ENCODE measurements at regions of chr12 and their contacts with region 1.

Region 1: GRCh38 chr12:6697584-6698351 is 2.8 kb downstream of the PIANP start:
- DNase-seq: no peak
- ATAC-seq: peak; percentile 43 to 67 (median 65)
- H3K4me3 ChIP-seq: no peak overlapping the region
- H3K27ac ChIP-seq: no peak overlapping the region
- H3K4me1 ChIP-seq: peaks cover 0 to 15% (median 8%) of the 10 kb centered on the region in 12 donors
- H3K27me3 ChIP-seq: peaks cover 10 to 70% (median 45%) of the 10 kb centered on the region in 9 donors
- CTCF ChIP-seq: peak in 11 of 12 donors; percentile 12 to 50 (median 37)
- POLR2A ChIP-seq: no peak

Region 2: GRCh38 chr12:6451348-6452244 is 246.2 kb before region 1 on chr12 and contains the start of gene TAPBPL:
- intact Hi-C with region 1: no loop called
- DNase-seq: peak; percentile 88 to 93 (median 90)
- ATAC-seq: peak; percentile 91 to 96 (median 94)
- H3K4me3 ChIP-seq: peak within 1 kb of the TSS; percentile 40 to 99 (median 68)
- H3K27ac ChIP-seq: peak within 1 kb of the TSS; percentile 90 to 100 (median 97)
- H3K4me1 ChIP-seq: peaks cover 0 to 42% (median 25%) of the 10 kb centered on the region in 12 donors
- H3K27me3 ChIP-seq: no peaks in the 10 kb centered on the region
- CTCF ChIP-seq: no peak
- POLR2A ChIP-seq: peak; percentile 19 to 64
- total RNA-seq, gene TAPBPL: 6.9 to 55.6 (median 14.1) TPM

Region 3: DNA sequence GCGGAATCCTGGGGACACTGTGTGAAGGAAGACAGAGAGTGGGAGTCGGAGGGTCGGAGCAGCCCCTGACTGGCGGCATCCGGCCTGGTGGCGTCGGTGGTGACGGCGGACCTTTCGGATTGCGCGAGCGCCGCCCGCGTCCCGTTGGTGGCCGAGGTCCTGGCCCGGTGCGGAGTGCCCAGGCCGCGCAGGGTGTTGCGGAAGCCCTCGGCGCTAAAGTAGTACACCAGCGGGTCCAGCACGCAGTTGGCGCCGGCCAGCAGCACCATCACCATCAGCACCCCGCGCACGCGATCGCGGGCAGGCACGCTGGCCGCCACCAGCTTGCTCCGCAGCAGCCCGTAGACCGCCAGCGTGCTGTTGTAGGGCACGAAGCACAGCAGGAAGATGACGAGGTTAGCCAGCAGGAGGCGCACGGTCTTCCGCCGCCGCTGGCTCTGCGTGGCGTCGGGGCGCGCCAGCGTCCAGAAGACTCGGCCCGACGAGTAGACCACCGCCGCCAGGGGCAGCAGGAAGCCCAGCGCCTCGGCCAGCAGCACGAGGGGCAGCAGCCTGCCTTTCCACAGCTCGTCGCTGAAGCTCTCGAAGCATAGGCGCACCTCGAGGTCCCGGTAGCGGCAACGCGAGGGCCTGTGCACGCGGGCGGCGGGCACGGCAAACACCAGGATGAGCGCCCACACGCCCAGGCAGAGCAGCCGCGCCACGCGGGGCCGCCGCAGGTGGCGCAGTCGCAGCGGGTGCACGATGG is 77.5 kb before region 1 on chr12:
- intact Hi-C with region 1: loop called in 4 of 10 experiments (anchors 5 to 10 kb)
- DNase-seq: peak in 3 of 5 donors; percentile 51 to 87 (median 53)
- ATAC-seq: peak in 3 of 4 donors; percentile 22 to 48 (median 45)
- H3K4me3 ChIP-seq: peak overlapping the region in 10 of 12 donors; percentile 3 to 43 (median 28)
- H3K27ac ChIP-seq: no peak overlapping the region
- H3K4me1 ChIP-seq: peaks cover 0 to 40% (median 0%) of the 10 kb centered on the region in 12 donors
- H3K27me3 ChIP-seq: peaks cover 0 to 15% (median 0%) of the 10 kb centered on the region in 9 donors
- CTCF ChIP-seq: peak; percentile 29 to 68 (median 50)
- POLR2A ChIP-seq: no peak

Region 4: GRCh38 chr12:6723607-6724396 is 26.0 kb after region 1 on chr12 and contains the start of gene COPS7A:
- intact Hi-C with region 1: no loop called
- DNase-seq: peak; percentile 98 to 99 (median 99)
- ATAC-seq: peak; percentile 98 to 99 (median 99)
- H3K4me3 ChIP-seq: peak within 1 kb of the TSS; percentile 37 to 84 (median 66)
- H3K27ac ChIP-seq: peak within 1 kb of the TSS; percentile 68 to 95 (median 90)
- H3K4me1 ChIP-seq: peaks cover 0 to 23% (median 11%) of the 10 kb centered on the region in 12 donors
- H3K27me3 ChIP-seq: no peaks in the 10 kb centered on the region
- CTCF ChIP-seq: peak in 3 of 12 donors; percentile 8 to 18 (median 9)
- POLR2A ChIP-seq: peak in 1 of 2 donors; percentile 58
- total RNA-seq, gene COPS7A: 56.7 to 96.4 (median 82.6) TPM

Measured in heart left ventricle (tissue), 16 donors.